Mammary epithelial cell (primary cell): ENCODE measurements at regions of chr15 and their contacts with region 1.

Region 1: GRCh38 chr15:44058126-44058525 is 136.9 kb downstream of the FRMD5 start:
- DNase-seq: no peak
- H3K4me3 ChIP-seq: no peak overlapping the region
- H3K27ac ChIP-seq: no peak overlapping the region
- H3K4me1 ChIP-seq: no peaks in the 10 kb centered on the region
- H3K27me3 ChIP-seq: no peaks in the 10 kb centered on the region
- CTCF ChIP-seq: no peak

Region 2: GRCh38 chr15:43749690-43750345 is 308.3 kb before region 1 on chr15:
- CTCF ChIA-PET with region 1: no interaction called
- dilution Hi-C with region 1: no loop called
- in situ Hi-C with region 1: no loop called
- intact Hi-C with region 1: no loop called
- DNase-seq: no peak
- H3K4me3 ChIP-seq: peak overlapping the region in 1 of 3 experiments; percentile 16
- H3K27ac ChIP-seq: peak overlapping the region; percentile 15
- H3K4me1 ChIP-seq: peaks cover 24% of the 10 kb centered on the region
- H3K27me3 ChIP-seq: no peaks in the 10 kb centered on the region
- CTCF ChIP-seq: no peak

Region 3: DNA sequence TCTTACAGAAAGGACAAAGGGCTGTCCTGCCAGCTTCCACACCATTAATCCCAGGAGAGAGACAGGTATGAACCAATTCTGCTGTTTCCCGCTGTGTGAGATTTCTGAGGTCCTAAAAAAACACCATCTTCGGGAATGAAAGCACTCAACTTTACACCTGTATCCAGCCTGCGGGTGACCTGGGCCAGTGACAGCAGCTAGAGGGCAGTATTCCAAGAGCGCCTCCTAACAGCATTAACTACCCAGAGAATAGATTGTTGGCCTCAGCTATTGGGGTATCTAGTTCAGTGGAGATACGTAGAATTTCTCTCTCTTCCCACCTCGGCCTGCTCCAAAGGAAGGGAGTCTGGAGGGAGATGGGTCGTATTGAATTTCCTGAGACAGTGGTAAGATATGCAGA is 176.2 kb before region 1 on chr15:
- CTCF ChIA-PET with region 1: no interaction called
- dilution Hi-C with region 1: no loop called
- in situ Hi-C with region 1: no loop called
- intact Hi-C with region 1: no loop called
- DNase-seq: no peak
- H3K4me3 ChIP-seq: no peak overlapping the region
- H3K27ac ChIP-seq: no peak overlapping the region
- H3K4me1 ChIP-seq: no peaks in the 10 kb centered on the region
- H3K27me3 ChIP-seq: no peaks in the 10 kb centered on the region
- CTCF ChIP-seq: peak; percentile 30 to 55

Region 4: DNA sequence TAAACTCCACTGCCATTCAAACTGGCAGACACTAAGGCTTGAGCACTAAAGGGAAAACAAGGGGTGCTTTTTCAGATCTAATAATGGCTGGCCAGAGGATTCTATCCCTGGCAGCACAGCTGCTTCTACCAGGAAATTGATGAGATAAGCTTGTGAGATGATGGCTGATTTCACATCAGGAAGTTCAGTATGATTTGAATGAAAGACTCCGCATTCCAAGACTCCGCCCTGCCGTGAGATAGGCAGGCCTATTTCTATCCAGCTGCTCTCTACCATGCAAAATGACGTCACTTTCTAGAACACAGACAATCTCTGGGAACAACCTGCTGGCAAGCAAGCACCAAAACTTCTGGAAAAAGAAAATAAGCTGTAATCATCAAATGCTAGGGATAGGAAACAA is 59.5 kb before region 1 on chr15:
- CTCF ChIA-PET with region 1: no interaction called
- dilution Hi-C with region 1: loop called (anchors 5 kb)
- in situ Hi-C with region 1: no loop called
- intact Hi-C with region 1: no loop called
- DNase-seq: no peak
- H3K4me3 ChIP-seq: no peak overlapping the region
- H3K27ac ChIP-seq: no peak overlapping the region
- H3K4me1 ChIP-seq: peaks cover 4% of the 10 kb centered on the region
- H3K27me3 ChIP-seq: no peaks in the 10 kb centered on the region
- CTCF ChIP-seq: no peak